ENCODE measurements at regions of chr15 and their contacts with region 1.

Region 1: GRCh38 chr15:35912196-35912595 is 366.2 kb upstream of the DPH6 start:
- DNase-seq: no peak
- ATAC-seq: peak; percentile 85

Region 2: GRCh38 chr15:35519541-35520149 is 392.6 kb before region 1 on chr15:
- intact Hi-C with region 1: loop called (anchors 5 kb)
- DNase-seq: no peak
- ATAC-seq: peak; percentile 69